Esophagus muscularis mucosa (tissue), 4 donors: ENCODE measurements at regions of chr1 and their contacts with region 1.

Region 1: DNA sequence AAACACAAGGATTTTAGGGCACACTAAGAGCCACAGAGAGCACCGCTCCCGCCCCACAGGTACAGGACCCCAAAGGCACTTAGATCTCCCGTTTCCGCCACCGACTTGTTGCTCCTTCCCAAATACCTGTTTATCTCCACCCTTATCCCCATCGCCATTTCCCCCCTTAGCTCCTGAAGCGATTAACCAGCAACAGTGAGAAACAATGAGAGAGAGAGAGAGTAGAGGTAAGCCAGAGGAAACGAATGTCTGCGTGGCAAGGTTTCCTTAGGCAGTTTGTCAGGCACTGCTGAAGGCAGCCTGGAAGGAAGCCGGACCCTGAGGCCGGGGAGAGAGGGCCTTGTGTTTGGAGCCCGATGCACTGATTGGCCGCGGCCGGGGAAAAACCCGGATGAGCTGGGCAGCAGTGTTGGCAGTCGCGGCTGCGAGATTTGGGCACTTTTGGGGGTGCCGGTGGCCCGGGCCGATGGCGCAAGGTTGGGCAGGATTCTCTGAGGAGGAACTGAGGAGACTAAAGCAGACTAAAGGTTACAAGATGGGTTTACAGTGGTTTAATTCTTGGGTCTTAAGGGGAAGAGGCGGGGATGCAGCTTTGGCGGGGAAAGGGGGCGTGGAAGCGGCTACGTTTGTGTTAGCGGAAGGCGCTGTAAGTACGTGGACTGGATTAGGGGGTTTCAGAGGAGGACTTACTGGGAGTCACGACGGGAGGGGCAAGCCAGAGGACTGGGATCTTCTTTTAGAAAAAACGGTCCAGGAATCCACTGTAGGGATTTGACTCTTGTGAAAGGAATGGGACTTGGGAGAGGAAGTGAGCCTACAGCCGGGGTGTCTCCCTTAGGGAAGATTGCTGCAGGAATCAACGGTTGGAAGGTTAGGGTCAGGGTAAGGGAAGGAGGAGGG is at the start of gene GORAB:
- DNase-seq: peak; percentile 96
- H3K4me3 ChIP-seq: peak within 1 kb of the TSS; percentile 66 to 81 (median 69)
- H3K27ac ChIP-seq: peak within 1 kb of the TSS; percentile 84 to 93 (median 88)
- H3K4me1 ChIP-seq: peaks cover 15 to 28% (median 22%) of the 10 kb centered on the region in 4 donors
- H3K27me3 ChIP-seq: no peaks in the 10 kb centered on the region
- CTCF ChIP-seq: no peak
- EP300 ChIP-seq: no peak
- POLR2A ChIP-seq: peak; percentile 26
- total RNA-seq, gene GORAB: 4.3 to 8.0 (median 5.8) TPM

Region 2: GRCh38 chr1:170074250-170075157 is 457.5 kb before region 1 on chr1 and contains the start of gene KIFAP3:
- intact Hi-C with region 1: loop called (anchors 5 kb)
- DNase-seq: peak; percentile 98
- H3K4me3 ChIP-seq: peak within 1 kb of the TSS; percentile 69 to 85 (median 80)
- H3K27ac ChIP-seq: peak within 1 kb of the TSS; percentile 86 to 88 (median 86)
- H3K4me1 ChIP-seq: peaks cover 11 to 33% (median 25%) of the 10 kb centered on the region in 4 donors
- H3K27me3 ChIP-seq: no peaks in the 10 kb centered on the region
- CTCF ChIP-seq: peak; percentile 52 to 67 (median 58)
- EP300 ChIP-seq: no peak
- POLR2A ChIP-seq: no peak
- total RNA-seq, gene KIFAP3: 23.9 to 35.9 (median 30.0) TPM

Region 3: GRCh38 chr1:170214117-170215032 is 317.6 kb before region 1 on chr1:
- intact Hi-C with region 1: loop called (anchors 10 kb)
- DNase-seq: no peak
- H3K4me3 ChIP-seq: no peak overlapping the region
- H3K27ac ChIP-seq: peak overlapping the region; percentile 59 to 67 (median 64)
- H3K4me1 ChIP-seq: peaks cover 0 to 47% (median 31%) of the 10 kb centered on the region in 4 donors
- H3K27me3 ChIP-seq: no peaks in the 10 kb centered on the region
- CTCF ChIP-seq: no peak
- EP300 ChIP-seq: no peak
- POLR2A ChIP-seq: no peak

Region 4: DNA sequence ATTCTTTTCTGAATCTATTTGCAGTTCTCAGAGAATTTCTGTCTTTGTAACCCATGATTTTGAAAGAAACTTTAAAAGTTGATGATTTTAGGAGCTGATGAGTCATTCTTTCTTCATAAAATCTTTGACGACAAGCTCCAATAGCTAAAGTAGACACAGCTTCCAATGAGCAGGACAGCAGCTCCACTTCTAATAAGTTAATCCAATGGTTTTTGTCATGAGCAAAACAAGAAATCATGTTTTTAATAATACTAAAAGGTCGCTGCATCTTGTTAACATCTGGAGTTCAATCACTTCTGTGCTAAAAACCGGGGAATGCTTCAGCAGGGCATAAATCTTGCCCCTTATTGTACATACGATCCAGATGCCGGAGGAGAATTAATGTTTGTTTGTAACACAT is 49.0 kb before region 1 on chr1:
- intact Hi-C with region 1: no loop called
- DNase-seq: no peak
- H3K4me3 ChIP-seq: no peak overlapping the region
- H3K27ac ChIP-seq: no peak overlapping the region
- H3K4me1 ChIP-seq: no peaks in the 10 kb centered on the region
- H3K27me3 ChIP-seq: no peaks in the 10 kb centered on the region
- CTCF ChIP-seq: no peak
- EP300 ChIP-seq: no peak
- POLR2A ChIP-seq: no peak